ENCODE measurements at regions of chr6 and their contacts with region 1.

Region 1: GRCh38 chr6:125114248-125114858 is 39.2 kb upstream of the TPD52L1 start:
- DNase-seq: peak in 1 of 2 donors; percentile 55
- ATAC-seq: peak; percentile 49

Region 2: DNA sequence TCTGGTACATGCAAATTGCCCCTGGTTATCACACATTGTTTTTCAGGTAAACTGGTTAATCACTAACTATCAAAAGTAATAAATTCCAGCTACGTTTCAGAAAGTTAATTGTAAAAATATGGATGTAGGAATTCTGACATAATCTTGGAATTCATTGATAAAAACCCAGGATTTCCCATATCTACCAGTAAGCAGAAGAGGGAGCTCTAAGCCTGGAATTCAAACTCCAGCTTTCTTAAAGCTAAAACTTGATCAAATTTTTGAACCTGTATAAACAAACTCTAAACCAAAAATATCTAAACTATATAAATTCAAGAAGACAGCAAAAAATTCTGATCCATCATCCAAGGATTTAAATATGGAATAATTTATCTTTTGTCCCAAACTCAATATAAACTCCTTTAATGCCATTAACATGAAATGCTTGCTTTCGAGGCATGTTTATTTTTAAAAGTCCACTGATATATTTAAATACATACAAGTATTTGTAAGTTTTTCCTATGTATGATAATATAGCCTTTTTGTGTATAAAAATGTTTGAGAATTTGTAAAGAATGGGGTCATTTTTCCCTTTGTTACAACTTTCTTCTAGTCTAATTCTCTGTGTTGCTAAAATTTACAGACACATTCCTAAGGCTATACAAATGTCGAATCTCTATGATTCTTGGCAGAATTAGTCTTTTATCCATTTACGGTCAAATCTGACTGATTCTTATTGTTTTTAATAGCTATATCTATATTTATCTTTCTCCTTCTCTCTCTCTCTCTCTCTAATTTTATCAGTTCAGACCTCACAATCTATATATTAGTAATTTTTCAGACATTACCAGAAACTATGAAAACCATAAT is 243.5 kb before region 1 on chr6:
- intact Hi-C with region 1: loop called (anchors 1 to 10 kb)
- DNase-seq: no peak
- ATAC-seq: no peak

Region 3: GRCh38 chr6:125031385-125031784 is 83.0 kb before region 1 on chr6:
- intact Hi-C with region 1: no loop called
- DNase-seq: no peak
- ATAC-seq: no peak

Region 4: DNA sequence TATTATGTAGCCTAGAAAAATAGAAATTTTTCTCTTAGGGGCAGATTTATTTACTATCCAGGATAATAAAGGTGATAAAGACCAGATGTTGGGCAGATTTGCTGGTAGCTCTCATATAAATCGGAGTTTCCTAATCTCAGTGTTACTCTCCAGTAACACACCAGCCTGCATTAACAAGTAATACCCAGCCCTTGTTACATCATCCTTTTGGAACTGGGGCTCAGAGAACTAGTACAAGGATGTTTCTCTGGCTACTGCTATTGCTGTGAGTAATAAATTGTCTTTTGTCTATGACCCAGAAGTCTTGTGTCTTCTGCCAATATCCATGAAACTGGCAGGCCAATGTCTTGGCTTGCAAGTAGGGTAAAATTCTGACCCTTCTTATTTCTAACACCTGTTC is 56.0 kb after region 1 on chr6:
- intact Hi-C with region 1: no loop called
- DNase-seq: no peak
- ATAC-seq: no peak

Measured in left colon (tissue), 2 donors.